Activated CD4-positive, alpha-beta memory T cell treated with anti-CD3 and anti-CD28 coated beads for 36 hours (primary cell): ENCODE measurements at regions of chr11 and their contacts with region 1.

Region 1: DNA sequence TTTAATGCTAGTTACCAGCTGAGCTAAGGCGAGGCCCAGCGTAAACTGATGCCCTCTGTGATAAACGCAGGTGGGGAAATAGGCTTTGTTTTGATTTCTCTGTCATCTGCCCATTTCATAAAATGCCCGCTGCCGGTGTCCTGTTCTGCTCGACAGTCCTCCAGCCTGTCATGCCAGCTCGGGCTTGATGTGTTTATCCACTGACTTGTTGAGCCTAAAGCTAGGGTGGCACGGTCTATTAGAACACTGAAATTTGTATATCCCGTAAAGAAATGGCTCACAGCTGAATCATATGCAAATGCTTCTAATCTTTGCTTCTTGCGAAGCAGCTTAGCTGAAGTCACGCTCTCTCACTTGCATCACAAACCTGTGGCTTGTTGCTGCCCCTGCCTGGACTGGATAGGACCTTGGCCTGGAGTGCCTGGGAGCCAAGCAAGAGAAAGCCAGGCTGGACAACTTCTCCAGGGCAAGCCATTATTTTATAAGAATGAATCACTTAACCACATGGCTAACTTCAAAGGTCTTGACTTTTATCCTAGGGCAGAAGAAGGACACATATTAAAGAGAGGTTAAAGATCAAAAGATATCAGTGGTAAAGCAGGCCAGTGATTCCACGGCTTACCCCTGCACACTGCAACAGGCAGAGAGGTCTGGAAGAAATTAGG is 33.1 kb downstream of the EHF start:
- DNase-seq: peak; percentile 47
- H3K4me3 Mint-ChIP-seq: no peak overlapping the region
- H3K27ac Mint-ChIP-seq: no peak overlapping the region
- H3K4me1 Mint-ChIP-seq: peaks cover 48% of the 10 kb centered on the region
- H3K27me3 Mint-ChIP-seq: peaks cover 44% of the 10 kb centered on the region

Region 2: GRCh38 chr11:34234086-34234740 is 419.7 kb before region 1 on chr11:
- CTCF ChIA-PET with region 1: no interaction called
- POLR2A ChIA-PET with region 1: interaction called, 3 read pairs
- intact Hi-C with region 1: loop called (anchors 5 kb)
- DNase-seq: peak; percentile 90
- H3K4me3 Mint-ChIP-seq: no peak overlapping the region
- H3K27ac Mint-ChIP-seq: peak overlapping the region; percentile 77
- H3K4me1 Mint-ChIP-seq: peaks cover 46% of the 10 kb centered on the region
- H3K27me3 Mint-ChIP-seq: peaks cover 6% of the 10 kb centered on the region

Region 3: DNA sequence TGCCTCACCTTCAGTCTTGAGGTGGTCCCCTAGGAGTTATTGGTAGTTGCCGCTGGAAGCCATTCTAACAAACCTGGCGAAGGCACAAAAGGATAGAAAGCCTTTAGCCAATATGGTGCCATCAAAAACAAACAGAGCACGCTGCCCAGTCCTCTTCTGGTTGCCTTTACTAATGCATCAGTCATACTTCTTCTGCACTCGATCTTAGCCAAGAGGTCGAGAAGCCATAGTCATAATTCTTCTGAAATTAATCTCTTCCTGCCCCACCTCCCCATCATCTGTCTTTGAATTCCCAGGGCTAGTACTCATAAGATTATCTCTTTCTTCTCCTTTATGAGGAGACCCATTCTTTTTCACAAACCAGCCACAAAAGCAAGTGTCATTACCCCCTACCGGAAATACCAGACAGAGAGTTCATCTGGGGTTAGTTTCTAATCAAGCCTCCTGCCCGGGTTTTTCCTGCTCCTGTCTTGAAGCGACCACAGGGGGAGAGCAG is 54.5 kb before region 1 on chr11:
- CTCF ChIA-PET with region 1: no interaction called
- POLR2A ChIA-PET with region 1: no interaction called
- intact Hi-C with region 1: loop called (anchors 1 kb)
- DNase-seq: no peak
- H3K4me3 Mint-ChIP-seq: no peak overlapping the region
- H3K27ac Mint-ChIP-seq: no peak overlapping the region
- H3K4me1 Mint-ChIP-seq: peaks cover 16% of the 10 kb centered on the region
- H3K27me3 Mint-ChIP-seq: peaks cover 1% of the 10 kb centered on the region

Region 4: GRCh38 chr11:34633990-34634693 is 19.8 kb before region 1 on chr11:
- CTCF ChIA-PET with region 1: interaction called, 4 read pairs
- POLR2A ChIA-PET with region 1: no interaction called
- intact Hi-C with region 1: loop called (anchors 1 kb)
- DNase-seq: no peak
- H3K4me3 Mint-ChIP-seq: no peak overlapping the region
- H3K27ac Mint-ChIP-seq: no peak overlapping the region
- H3K4me1 Mint-ChIP-seq: peaks cover 14% of the 10 kb centered on the region
- H3K27me3 Mint-ChIP-seq: peaks cover 5% of the 10 kb centered on the region

Region 5: DNA sequence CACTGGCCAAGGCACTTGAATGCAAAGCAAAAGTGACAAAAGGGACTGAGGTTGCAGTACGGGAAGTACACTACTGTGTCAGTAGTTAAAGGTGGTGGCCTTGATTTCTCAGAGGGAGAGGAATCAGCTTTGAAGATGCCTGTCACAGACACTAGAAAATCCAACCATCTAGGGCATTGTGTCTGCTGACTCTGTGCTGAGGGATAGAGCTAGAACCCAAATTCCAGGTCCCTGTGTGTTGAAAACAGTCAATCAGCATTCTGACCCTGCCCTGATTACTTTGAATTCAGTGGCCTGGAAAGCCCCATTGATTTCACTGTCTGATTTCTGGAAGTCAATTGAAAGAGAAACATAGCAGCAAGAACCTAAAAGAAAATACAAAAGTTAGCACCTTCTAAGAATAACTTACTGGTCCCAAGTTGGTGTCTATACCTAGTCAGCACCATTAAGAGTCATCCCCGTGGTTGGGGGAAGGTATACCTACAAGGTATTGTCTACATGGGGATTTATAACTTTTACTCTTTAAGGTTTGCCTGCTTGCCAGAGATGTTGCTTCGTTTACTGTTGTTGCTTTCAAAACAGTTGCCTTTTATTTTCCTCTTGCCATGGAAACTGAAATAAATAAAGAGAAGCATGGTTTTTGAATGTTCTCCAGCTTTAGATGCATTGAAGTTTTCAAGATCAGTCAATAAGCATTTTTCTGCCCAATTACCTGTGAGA is 359.7 kb after region 1 on chr11:
- CTCF ChIA-PET with region 1: no interaction called
- POLR2A ChIA-PET with region 1: no interaction called
- intact Hi-C with region 1: loop called (anchors 1 kb)
- DNase-seq: peak; percentile 53
- H3K4me3 Mint-ChIP-seq: peak overlapping the region; percentile 58
- H3K27ac Mint-ChIP-seq: peak overlapping the region; percentile 92
- H3K4me1 Mint-ChIP-seq: peaks cover 44% of the 10 kb centered on the region
- H3K27me3 Mint-ChIP-seq: peaks cover 4% of the 10 kb centered on the region

Region 6: DNA sequence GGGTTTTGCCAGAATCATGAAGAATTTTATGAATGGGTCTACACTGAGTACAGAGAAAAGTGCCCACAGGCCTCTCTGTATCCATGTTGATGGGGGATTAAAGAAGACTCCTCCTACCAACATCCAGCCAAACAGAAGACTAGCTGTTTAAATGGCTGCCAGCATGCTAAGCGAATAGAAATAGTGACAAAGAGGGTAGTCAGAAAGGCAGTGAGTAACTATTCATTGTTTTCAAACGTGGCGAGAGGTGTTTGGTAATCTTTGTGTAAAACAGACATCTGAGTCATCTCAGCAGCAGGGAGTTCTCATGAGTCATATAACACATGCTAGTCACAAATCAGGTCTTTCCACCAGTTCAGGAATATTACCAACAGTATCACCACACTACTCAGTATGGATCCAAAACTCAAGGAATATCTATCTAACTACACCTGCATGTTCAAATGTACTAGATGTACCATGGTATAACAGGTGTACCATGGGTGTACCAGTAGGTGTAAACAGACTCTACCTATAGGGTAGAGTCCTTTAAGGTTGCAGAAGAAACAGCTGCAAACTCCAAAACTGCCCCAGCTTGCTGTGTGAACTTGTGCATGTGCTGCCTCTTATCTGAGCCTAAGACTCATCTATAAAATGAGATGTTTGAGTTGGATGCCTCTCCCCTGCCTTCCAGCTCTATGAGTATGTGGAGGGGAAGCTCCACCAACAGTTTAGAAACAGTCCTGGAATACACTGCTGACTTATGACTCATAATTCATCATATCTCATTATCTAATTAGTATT is 683.4 kb after region 1 on chr11:
- CTCF ChIA-PET with region 1: no interaction called
- POLR2A ChIA-PET with region 1: no interaction called
- intact Hi-C with region 1: loop called (anchors 1 kb)
- DNase-seq: peak; percentile 35
- H3K4me3 Mint-ChIP-seq: no peak overlapping the region
- H3K27ac Mint-ChIP-seq: peak overlapping the region; percentile 56
- H3K4me1 Mint-ChIP-seq: peaks cover 40% of the 10 kb centered on the region
- H3K27me3 Mint-ChIP-seq: peaks cover 2% of the 10 kb centered on the region